AG04449 (cell line): ENCODE measurements at regions of chr7 and their contacts with region 1.

Region 1: DNA sequence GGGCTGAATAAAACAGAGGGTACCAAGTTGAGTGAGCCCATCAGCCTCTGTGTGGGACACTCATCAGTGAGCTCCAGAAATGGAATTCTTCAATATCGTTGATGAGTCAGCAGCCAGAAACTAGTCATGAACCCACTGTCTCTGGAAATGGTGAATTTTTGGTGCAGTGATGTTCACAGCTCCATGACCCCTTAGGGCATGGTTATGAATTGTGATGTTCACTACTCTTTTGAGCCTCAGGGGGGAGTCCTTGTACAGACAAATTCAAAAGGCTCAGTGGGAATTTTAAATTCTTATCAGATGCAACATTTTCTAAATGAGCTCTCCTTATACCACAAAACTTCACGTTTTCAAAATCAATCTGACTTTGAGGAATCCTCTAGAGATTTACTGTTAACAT is 335.7 kb downstream of the PHTF2 start:
- DNase-seq: no peak
- H3K4me3 ChIP-seq: no peak overlapping the region
- CTCF ChIP-seq: peak; percentile 57

Region 2: GRCh38 chr7:77812290-77812685 is 322.0 kb before region 1 on chr7:
- CTCF ChIA-PET with region 1: no interaction called
- POLR2A ChIA-PET with region 1: no interaction called
- DNase-seq: peak; percentile 81
- H3K4me3 ChIP-seq: no peak overlapping the region
- CTCF ChIP-seq: no peak

Region 3: GRCh38 chr7:78052112-78052511 is 82.1 kb before region 1 on chr7:
- CTCF ChIA-PET with region 1: no interaction called
- POLR2A ChIA-PET with region 1: no interaction called
- DNase-seq: no peak
- H3K4me3 ChIP-seq: no peak overlapping the region
- CTCF ChIP-seq: no peak

Region 4: DNA sequence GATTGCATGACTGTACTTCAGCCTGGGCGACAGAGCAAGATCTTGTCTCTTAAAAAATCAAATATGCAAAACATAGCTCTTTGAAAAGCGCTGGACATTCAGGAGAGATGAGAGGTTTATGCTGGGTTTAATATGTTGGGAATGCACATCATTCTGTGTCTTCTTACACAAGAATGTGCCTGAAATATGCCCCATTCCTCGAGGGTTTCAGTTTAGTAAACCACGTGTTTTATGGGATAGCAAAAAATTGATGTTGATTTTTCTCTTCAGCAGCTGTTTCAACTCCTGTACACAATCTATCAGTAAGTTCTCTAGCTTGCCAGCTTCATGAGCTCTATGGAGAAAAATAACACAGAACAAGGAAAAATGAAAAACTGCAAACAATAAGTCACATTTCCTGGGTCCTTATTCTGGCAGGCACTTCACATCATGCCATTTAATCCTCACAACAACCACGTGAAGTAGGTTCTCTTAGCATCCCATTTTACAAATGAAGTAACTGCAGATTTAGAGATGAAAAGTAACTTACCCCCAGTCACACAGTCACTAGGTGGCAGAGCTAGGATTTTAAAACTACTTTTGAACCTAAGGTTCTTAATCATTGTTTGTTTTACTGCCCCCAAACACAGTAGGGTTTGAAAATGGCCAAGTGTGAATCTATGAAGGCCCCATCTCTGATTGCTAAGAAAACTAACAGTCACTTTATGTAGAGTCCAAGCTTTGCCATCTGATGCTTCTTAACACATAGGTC is 87.9 kb after region 1 on chr7:
- CTCF ChIA-PET with region 1: interaction called, 25 read pairs
- POLR2A ChIA-PET with region 1: interaction called, 7 read pairs
- DNase-seq: peak; percentile 87
- H3K4me3 ChIP-seq: no peak overlapping the region
- CTCF ChIP-seq: no peak

Region 5: GRCh38 chr7:78232806-78233205 is 98.5 kb after region 1 on chr7:
- CTCF ChIA-PET with region 1: interaction called, 14 read pairs
- POLR2A ChIA-PET with region 1: no interaction called
- DNase-seq: no peak
- H3K4me3 ChIP-seq: no peak overlapping the region
- CTCF ChIP-seq: no peak

Region 6: GRCh38 chr7:78264105-78264504 is 129.8 kb after region 1 on chr7:
- CTCF ChIA-PET with region 1: interaction called, 10 read pairs
- POLR2A ChIA-PET with region 1: no interaction called
- DNase-seq: no peak
- H3K4me3 ChIP-seq: no peak overlapping the region
- CTCF ChIP-seq: no peak

Region 7: DNA sequence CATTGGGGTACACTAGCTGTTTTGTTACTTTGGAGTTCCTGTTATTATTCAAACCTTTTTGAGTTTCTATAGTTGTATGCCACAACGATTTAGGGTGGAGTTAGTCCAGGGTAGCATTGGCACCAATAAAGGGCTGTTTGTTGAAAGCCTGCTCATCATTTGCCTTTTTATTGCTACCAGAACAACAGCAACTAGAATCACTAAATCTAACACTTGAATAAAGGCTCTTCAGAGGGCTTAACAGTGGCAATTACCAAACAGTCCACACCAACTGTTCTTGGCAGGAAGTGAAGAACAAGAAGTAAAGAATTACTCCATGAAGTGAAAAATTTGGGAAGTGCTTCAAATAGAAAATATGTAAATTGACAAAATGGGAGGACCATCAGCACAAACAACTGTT is 285.7 kb after region 1 on chr7:
- CTCF ChIA-PET with region 1: no interaction called
- POLR2A ChIA-PET with region 1: no interaction called
- DNase-seq: no peak
- H3K4me3 ChIP-seq: no peak overlapping the region
- CTCF ChIP-seq: no peak